ENCODE measurements at regions of chr11 and their contacts with region 1.

Region 1: DNA sequence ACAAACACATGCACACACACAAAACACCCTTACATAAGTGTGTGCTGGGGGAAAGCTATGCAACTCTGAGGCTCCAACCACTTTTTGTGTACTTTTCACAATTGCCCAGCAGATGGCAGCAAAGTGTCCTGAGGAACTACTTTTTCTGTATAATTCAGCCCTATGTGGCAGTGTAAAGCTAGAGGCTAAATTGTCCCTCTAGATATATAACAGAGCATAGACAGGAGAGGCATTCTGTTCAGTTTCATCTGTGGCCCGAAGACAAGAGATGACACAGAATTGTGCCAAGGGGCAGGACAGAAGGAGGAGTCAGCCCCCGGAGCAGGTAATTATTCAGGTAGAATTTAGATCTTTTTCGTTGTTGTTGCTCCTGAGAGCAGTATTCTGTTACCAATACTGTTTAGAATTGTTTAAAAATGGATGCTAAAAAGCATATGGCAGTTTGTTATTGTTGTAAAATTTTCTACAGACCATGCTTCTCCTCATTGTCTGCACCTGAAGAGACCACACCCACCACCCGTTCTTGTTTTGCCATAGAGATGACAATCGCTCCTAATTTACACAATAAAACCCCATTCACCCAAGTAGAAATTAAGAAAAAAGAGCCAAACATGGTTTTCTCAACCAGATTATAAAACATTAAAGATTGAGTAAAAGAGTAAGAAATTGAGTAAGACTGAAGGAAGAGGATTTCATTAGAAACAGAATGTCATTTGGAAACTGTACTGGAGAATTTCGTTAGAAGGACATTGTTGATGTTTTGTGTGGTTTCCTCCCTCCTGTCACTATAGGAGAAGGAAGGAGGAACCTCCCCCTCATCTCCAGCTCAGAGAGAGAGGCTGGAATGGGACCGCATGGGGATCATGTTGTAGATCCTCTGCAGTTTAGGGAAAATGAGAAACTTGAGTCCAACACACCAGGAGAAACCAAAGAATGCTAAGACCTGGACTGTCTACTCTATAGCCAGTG is 14.5 kb upstream of the MS4A7 start:
- DNase-seq: peak; percentile 76
- H3K4me3 ChIP-seq: no peak overlapping the region
- H3K27ac ChIP-seq: peak overlapping the region in 1 of 4 donors; percentile 22
- H3K4me1 ChIP-seq: no peaks in the 10 kb centered on the region
- H3K27me3 ChIP-seq: no peaks in the 10 kb centered on the region
- CTCF ChIP-seq: peak; percentile 64 to 80 (median 72)
- EP300 ChIP-seq: no peak
- POLR2A ChIP-seq: no peak

Region 2: DNA sequence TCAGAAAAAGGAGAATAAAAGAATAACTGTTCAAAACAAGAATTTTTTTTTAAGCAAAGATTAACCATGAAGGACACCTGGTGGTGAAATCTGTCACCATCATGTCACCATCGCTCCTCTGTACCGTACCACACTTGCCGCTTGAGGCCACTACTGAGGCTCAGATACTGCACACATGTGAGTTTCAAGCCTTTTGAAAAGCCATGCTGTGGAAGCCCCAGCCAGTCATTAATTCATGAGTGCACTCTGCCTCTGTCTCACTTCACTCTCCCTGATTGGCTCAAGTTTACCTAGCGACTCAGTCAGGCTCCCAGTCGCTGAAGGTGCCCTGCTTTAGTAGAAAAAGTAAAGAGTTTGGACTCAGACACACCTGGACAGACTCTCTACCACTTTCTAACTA is 122.2 kb after region 1 on chr11:
- in situ Hi-C with region 1: loop called in 1 of 4 experiments (anchors 10 kb)
- intact Hi-C with region 1: no loop called
- DNase-seq: peak; percentile 34
- H3K4me3 ChIP-seq: no peak overlapping the region
- H3K27ac ChIP-seq: no peak overlapping the region
- H3K4me1 ChIP-seq: no peaks in the 10 kb centered on the region
- H3K27me3 ChIP-seq: no peaks in the 10 kb centered on the region
- CTCF ChIP-seq: peak; percentile 26 to 57 (median 36)
- EP300 ChIP-seq: no peak
- POLR2A ChIP-seq: no peak

Region 3: DNA sequence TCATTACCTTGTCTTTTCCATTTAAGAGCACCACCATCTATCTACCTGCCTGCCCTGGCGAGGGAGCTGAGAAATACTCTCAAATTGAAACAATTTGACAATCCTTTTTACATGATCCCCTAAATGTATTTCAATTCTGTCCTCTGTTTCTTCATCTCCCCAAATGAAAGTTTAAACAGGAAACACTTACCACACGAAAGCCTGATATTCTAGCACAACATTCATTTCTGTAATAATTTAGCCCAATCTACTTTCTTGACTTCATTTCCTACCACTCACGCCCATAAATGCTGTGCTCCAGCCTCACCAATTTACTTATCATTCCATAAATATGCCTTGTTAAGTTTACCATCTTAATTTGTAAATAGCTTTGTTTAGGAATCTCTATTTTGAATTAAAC is 245.8 kb after region 1 on chr11:
- in situ Hi-C with region 1: loop called in 3 of 4 experiments (anchors 5 to 10 kb)
- intact Hi-C with region 1: no loop called
- DNase-seq: no peak
- H3K4me3 ChIP-seq: no peak overlapping the region
- H3K27ac ChIP-seq: no peak overlapping the region
- H3K4me1 ChIP-seq: no peaks in the 10 kb centered on the region
- H3K27me3 ChIP-seq: peaks cover 6% of the 10 kb centered on the region
- CTCF ChIP-seq: no peak
- EP300 ChIP-seq: no peak
- POLR2A ChIP-seq: no peak

Region 4: GRCh38 chr11:60615497-60615896 is 251.7 kb after region 1 on chr11:
- in situ Hi-C with region 1: loop called in 3 of 4 experiments (anchors 5 to 10 kb)
- intact Hi-C with region 1: no loop called
- DNase-seq: no peak
- H3K4me3 ChIP-seq: no peak overlapping the region
- H3K27ac ChIP-seq: no peak overlapping the region
- H3K4me1 ChIP-seq: peaks cover 0 to 3% (median 0%) of the 10 kb centered on the region in 4 donors
- H3K27me3 ChIP-seq: peaks cover 6% of the 10 kb centered on the region
- CTCF ChIP-seq: no peak
- EP300 ChIP-seq: no peak
- POLR2A ChIP-seq: no peak

Region 5: DNA sequence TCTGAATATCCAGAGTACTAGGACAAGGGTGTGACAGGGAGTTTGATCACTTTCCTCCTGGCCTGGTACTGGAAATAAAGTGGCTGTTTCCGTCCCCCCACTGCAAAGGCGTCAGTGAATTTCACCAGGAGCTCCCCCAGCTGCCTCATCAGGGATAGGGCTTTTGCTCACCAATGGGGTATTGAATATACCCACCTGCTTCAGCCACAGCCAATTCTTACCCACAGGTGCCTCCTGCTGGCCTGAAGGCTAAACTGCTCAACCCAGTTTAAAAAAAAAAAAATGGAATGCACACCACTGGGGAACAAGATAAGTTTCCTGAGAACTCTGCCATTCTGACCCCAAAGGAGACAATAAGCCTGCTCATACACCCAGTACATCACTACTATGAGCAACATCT is 270.3 kb after region 1 on chr11:
- in situ Hi-C with region 1: loop called in 1 of 4 experiments (anchors 25 kb)
- intact Hi-C with region 1: no loop called
- DNase-seq: no peak
- H3K4me3 ChIP-seq: no peak overlapping the region
- H3K27ac ChIP-seq: no peak overlapping the region
- H3K4me1 ChIP-seq: no peaks in the 10 kb centered on the region
- H3K27me3 ChIP-seq: peaks cover 14% of the 10 kb centered on the region
- CTCF ChIP-seq: peak in 4 of 5 experiments; percentile 21 to 38 (median 30)
- EP300 ChIP-seq: no peak
- POLR2A ChIP-seq: no peak

Measured in transverse colon (tissue), 4 donors.